HEK293T (cell line): ENCODE measurements at regions of chr3 and their contacts with region 1.

Region 1: GRCh38 chr3:166788961-166789360 is 591.1 kb downstream of the ZBBX start:
- DNase-seq: no peak

Region 2: DNA sequence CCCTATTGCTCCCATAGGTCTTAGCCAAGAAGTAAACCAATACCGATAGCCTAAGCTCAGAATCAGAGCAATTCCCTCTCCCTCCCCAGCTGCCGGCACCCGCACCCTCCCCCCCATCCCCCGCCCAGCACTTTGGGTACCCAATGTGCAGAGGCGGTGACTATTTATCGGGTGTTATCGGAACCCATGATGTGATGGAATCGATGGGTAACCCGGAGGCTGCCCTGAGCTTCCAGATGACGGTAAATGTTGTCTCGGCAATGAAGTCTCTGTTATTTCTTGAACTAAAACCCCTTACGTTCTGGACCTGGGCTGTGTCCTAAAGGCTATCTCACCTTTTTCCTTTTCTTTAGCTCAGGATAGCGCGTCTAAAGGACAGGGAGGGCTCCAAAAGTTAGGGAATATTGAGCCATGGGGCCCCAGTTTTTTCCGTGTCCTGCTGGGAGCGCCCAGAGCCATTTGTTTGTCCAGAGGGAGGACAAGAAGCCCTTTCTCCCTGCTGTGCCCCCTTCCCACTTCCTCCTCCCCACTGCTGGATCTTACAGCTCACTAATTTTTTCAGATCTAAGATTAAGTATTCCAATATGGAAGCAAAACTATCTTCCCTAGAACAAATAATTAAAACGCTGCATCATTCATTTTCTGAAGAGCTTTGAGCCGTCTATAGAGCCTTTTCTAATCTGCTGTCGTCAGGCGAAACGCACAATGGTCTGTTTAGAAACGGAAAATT is 1594.3 kb before region 1 on chr3:
- CTCF ChIA-PET with region 1: interaction called, 10 read pairs
- POLR2A ChIA-PET with region 1: no interaction called
- DNase-seq: peak; percentile 9

Region 3: DNA sequence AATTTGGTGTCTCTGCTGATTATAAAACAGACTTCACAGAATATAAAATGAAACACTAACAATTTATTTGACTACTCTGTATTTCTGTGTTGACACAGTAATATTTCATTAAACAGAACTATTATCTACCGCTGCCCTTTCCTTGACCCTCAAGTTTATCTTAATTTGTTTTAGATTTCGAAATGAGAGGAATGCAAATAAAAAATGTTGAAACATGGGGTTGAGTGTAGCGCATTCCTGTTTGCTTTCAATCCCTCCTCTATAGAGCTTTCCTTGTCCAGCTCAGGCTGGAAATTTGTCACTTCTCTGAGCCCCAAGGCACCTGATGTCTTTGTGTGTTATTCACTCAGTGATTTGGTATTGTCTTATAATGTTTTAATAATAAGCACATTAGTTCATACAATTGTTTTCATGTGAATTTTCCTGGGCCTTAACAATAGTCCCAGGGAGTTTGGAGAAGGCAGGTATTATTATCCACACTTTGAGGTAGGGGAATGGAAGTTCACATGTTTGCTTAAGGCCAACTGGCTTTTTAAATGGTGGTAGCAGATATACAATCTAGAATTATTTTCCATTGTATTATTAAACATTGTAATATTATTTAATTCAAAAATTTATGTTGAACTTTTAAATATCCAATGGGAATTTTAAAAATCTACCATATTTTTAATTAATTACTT is 41.1 kb after region 1 on chr3:
- CTCF ChIA-PET with region 1: no interaction called
- POLR2A ChIA-PET with region 1: no interaction called
- DNase-seq: no peak